CD8-positive, alpha-beta T cell (primary cell): ENCODE measurements at regions of chr1 and their contacts with region 1.

Region 1: GRCh38 chr1:225977937-225978748 is 21.0 kb downstream of the SDE2 start:
- DNase-seq: peak in 3 of 9 experiments; percentile 27 to 45 (median 33)
- ATAC-seq: no peak
- H3K4me3 ChIP-seq: no peak overlapping the region
- H3K4me3 Mint-ChIP-seq: no peak overlapping the region
- H3K27ac ChIP-seq: no peak overlapping the region
- H3K27ac Mint-ChIP-seq: no peak overlapping the region
- H3K4me1 ChIP-seq: no peaks in the 10 kb centered on the region
- H3K4me1 Mint-ChIP-seq: peaks cover 4% of the 10 kb centered on the region
- H3K27me3 ChIP-seq: no peaks in the 10 kb centered on the region
- H3K27me3 Mint-ChIP-seq: no peaks in the 10 kb centered on the region
- CTCF ChIP-seq: no peak

Region 2: DNA sequence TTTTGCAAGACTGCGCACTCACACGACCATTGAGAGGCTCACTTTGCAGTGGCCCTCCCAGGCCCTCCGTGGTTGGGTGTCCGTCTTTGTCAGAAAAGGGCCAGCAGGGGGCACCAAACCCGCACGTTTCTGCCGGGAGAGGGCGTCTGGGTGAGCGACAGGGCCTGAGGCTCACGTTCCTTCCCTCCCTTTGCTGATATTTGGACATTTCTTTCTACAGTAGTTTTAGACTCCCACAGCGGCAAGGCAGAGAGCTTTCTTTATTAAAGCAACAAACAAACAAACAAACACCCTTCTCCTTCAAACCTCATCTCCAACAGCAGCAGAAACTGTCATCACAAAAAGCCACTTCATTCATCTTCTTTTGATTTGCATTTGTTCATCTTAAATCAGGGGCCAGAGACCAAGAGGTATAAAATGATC is 1464.3 kb before region 1 on chr1:
- CTCF ChIA-PET with region 1: no interaction called
- POLR2A ChIA-PET with region 1: no interaction called
- intact Hi-C with region 1: loop called (anchors 1 to 5 kb)
- DNase-seq: peak; percentile 68 to 91 (median 81)
- ATAC-seq: peak; percentile 78
- H3K4me3 ChIP-seq: no peak overlapping the region
- H3K4me3 Mint-ChIP-seq: no peak overlapping the region
- H3K27ac ChIP-seq: no peak overlapping the region
- H3K27ac Mint-ChIP-seq: no peak overlapping the region
- H3K4me1 ChIP-seq: no peaks in the 10 kb centered on the region
- H3K4me1 Mint-ChIP-seq: peaks cover 6% of the 10 kb centered on the region
- H3K27me3 ChIP-seq: no peaks in the 10 kb centered on the region
- H3K27me3 Mint-ChIP-seq: no peaks in the 10 kb centered on the region
- CTCF ChIP-seq: peak; percentile 85

Region 3: DNA sequence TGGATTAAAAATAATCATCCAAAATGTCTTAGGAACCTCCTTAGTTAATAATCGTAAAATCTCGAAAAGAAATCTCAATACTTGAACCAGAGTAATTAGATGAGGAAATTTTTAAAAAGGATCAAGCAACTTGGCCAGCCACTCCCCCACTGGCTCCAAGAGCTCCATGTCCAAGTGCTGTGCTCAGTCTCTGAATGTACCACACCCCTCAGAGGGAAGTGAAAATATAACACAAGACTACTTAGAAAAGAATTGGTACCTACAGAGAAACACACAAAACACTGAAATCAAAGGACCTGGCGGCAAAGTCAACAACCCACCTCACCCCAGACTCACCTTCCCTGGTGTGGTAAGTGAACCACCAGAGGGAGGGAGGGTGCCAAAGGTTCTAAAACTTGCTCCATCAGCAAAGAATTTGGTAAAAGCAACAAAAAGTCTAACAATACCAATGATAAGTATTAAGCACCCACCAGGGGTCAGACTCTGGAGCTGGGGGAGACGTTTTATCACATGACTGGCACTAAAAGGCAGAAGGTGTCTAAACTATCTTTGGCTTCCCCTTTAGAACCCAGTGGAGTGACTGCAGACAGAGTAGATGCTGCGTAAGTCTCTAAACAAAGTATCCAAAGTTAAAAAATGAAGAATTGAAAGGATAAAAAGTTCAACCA is 564.3 kb before region 1 on chr1:
- CTCF ChIA-PET with region 1: no interaction called
- POLR2A ChIA-PET with region 1: no interaction called
- intact Hi-C with region 1: loop called in 1 of 2 experiments (anchors 10 kb)
- DNase-seq: peak in 2 of 9 experiments; percentile 23 to 38
- ATAC-seq: no peak
- H3K4me3 ChIP-seq: no peak overlapping the region
- H3K4me3 Mint-ChIP-seq: no peak overlapping the region
- H3K27ac ChIP-seq: no peak overlapping the region
- H3K27ac Mint-ChIP-seq: no peak overlapping the region
- H3K4me1 ChIP-seq: no peaks in the 10 kb centered on the region
- H3K4me1 Mint-ChIP-seq: peaks cover 24% of the 10 kb centered on the region
- H3K27me3 ChIP-seq: no peaks in the 10 kb centered on the region
- H3K27me3 Mint-ChIP-seq: no peaks in the 10 kb centered on the region
- CTCF ChIP-seq: no peak

Region 4: DNA sequence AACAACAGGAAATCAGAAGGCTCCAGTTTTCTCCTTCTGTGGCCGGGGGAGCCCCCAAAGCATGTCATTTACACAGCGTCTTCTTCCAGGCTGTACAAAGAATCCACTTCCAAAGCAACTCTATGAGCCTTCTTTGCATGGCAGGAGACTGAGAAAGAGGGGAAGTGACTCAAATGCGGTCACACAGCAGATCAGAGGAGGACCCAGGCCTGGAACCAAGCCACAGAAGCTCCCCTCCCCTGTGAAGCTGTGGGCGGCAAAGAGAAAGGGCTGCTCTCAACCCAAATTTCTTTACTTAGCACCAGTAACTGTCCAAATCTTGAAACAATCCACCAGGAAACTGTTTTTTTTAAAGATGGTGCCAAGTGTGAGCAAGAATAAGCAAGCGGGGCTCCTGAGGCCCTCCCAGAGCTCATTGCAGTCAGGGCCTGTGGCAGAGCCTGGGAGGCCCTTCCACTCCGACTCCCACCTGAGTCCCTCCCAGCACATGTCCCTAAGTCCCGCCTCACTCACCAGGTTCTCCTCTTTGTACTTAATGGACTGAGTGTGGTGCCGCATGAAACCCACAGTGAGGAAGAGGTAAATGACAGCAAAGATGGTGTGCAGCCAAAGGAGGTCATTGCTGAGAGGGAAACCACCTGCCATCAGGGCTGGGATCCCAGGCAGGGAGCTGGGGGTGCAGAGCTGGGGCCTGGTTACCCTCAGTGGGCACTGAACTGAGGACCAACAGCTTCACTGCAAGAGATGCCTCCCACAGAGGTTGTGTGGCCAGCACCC is 111.9 kb before region 1 on chr1:
- CTCF ChIA-PET with region 1: interaction called, 4 read pairs
- POLR2A ChIA-PET with region 1: no interaction called
- intact Hi-C with region 1: loop called in 1 of 2 experiments (anchors 10 kb)
- DNase-seq: peak in 8 of 9 experiments; percentile 57 to 87 (median 78)
- ATAC-seq: peak; percentile 88
- H3K4me3 ChIP-seq: no peak overlapping the region
- H3K4me3 Mint-ChIP-seq: peak overlapping the region; percentile 55
- H3K27ac ChIP-seq: peak overlapping the region; percentile 27 to 54
- H3K27ac Mint-ChIP-seq: peak overlapping the region; percentile 92
- H3K4me1 ChIP-seq: peaks cover 30% of the 10 kb centered on the region
- H3K4me1 Mint-ChIP-seq: peaks cover 51% of the 10 kb centered on the region
- H3K27me3 ChIP-seq: no peaks in the 10 kb centered on the region
- H3K27me3 Mint-ChIP-seq: no peaks in the 10 kb centered on the region
- CTCF ChIP-seq: no peak

Region 5: GRCh38 chr1:225962440-225962975 is 15.6 kb before region 1 on chr1:
- CTCF ChIA-PET with region 1: interaction called, 7 read pairs
- POLR2A ChIA-PET with region 1: no interaction called
- intact Hi-C with region 1: loop called in 1 of 2 experiments (anchors 1 kb)
- DNase-seq: peak; percentile 28 to 78 (median 65)
- ATAC-seq: peak; percentile 64
- H3K4me3 ChIP-seq: no peak overlapping the region
- H3K4me3 Mint-ChIP-seq: no peak overlapping the region
- H3K27ac ChIP-seq: no peak overlapping the region
- H3K27ac Mint-ChIP-seq: no peak overlapping the region
- H3K4me1 ChIP-seq: peaks cover 21% of the 10 kb centered on the region
- H3K4me1 Mint-ChIP-seq: peaks cover 3% of the 10 kb centered on the region
- H3K27me3 ChIP-seq: peaks cover 0 to 3% of the 10 kb centered on the region in 2 experiments
- H3K27me3 Mint-ChIP-seq: no peaks in the 10 kb centered on the region
- CTCF ChIP-seq: peak; percentile 78